ENCODE measurements at regions of chr15 and their contacts with region 1.

Region 1: DNA sequence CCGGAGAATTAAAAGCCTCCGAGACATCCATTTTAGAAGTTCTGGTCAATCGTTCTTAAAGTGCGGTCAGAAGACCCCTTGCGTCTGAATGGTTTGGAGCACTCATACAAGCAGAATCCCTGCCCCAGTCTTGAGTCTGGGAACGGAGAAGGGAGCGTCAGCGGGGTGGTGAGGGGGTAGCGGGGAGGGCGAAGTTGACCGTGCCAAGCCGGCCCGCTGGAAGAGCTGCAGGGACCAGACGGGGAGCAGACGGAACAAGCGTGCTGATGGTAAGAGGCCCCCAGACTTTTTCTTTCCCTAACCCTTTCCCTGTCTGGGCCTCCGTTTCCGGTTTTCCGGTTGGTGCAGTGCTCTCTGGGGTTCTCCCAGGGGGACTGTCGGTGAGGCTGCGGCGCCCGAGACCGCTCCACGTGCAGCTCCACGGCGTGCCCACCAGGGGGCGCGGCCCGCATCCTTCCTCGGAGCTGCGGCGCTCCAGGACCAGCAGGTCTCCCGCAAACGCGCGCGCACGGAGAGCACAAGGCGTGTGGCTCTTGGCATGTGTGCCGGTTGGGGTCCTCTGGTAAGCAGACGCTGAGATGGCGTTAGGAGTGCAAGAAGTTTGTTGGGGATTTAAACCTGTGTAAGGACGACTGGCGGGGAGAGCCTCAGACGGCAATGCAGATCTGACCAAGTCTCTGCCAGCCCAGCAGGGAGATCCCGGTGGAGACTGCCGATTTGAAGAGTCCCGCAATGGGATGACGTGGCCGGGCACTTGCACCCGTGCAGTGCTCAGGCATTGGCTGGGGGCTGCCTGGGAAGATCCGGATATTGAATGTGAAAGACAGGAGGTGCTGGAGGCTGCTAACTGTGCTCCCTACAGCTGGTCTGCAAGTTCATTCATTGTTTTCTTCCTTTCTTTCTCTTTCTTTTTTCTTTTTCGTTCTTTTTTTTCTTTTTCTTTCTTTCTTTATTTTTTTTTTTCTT is 19.2 kb upstream of the CORO2B start:
- DNase-seq: peak; percentile 76
- ATAC-seq: peak; percentile 93
- H3K4me3 Mint-ChIP-seq: peak overlapping the region; percentile 57
- H3K27ac Mint-ChIP-seq: no peak overlapping the region
- H3K4me1 Mint-ChIP-seq: peaks cover 16% of the 10 kb centered on the region
- H3K27me3 Mint-ChIP-seq: peaks cover 44% of the 10 kb centered on the region

Region 2: GRCh38 chr15:68503791-68504680 is 55.6 kb before region 1 on chr15:
- CTCF ChIA-PET with region 1: no interaction called
- POLR2A ChIA-PET with region 1: no interaction called
- DNase-seq: peak; percentile 18
- ATAC-seq: no peak
- H3K4me3 Mint-ChIP-seq: no peak overlapping the region
- H3K27ac Mint-ChIP-seq: no peak overlapping the region
- H3K4me1 Mint-ChIP-seq: peaks cover 5% of the 10 kb centered on the region
- H3K27me3 Mint-ChIP-seq: peaks cover 8% of the 10 kb centered on the region

Region 3: GRCh38 chr15:68576235-68576892 is 16.7 kb after region 1 on chr15:
- CTCF ChIA-PET with region 1: interaction called, 13 read pairs
- POLR2A ChIA-PET with region 1: no interaction called
- DNase-seq: no peak
- ATAC-seq: no peak
- H3K4me3 Mint-ChIP-seq: no peak overlapping the region
- H3K27ac Mint-ChIP-seq: no peak overlapping the region
- H3K4me1 Mint-ChIP-seq: peaks cover 10% of the 10 kb centered on the region
- H3K27me3 Mint-ChIP-seq: peaks cover 60% of the 10 kb centered on the region

Region 4: GRCh38 chr15:68924866-68925560 is 365.4 kb after region 1 on chr15:
- CTCF ChIA-PET with region 1: interaction called, 12 read pairs
- POLR2A ChIA-PET with region 1: no interaction called
- DNase-seq: peak; percentile 70
- ATAC-seq: peak; percentile 55
- H3K4me3 Mint-ChIP-seq: no peak overlapping the region
- H3K27ac Mint-ChIP-seq: no peak overlapping the region
- H3K4me1 Mint-ChIP-seq: no peaks in the 10 kb centered on the region
- H3K27me3 Mint-ChIP-seq: peaks cover 27% of the 10 kb centered on the region

Measured in activated CD8-positive, alpha-beta T cell treated with anti-CD3 and anti-CD28 coated beads, Interleukin-2, amount 10 ng/mL, durations not matched to agents 7 days and 5 days (primary cell).